Gastrocnemius medialis (tissue), 4 donors: ENCODE measurements at regions of chr9 and their contacts with region 1.

Region 1: GRCh38 chr9:100426530-100427428 is at the start of gene MSANTD3:
- DNase-seq: peak; percentile 25 to 61
- ATAC-seq: peak; percentile 74 to 77
- H3K4me3 ChIP-seq: peak within 1 kb of the TSS; percentile 67 to 88 (median 80)
- H3K27ac ChIP-seq: peak within 1 kb of the TSS; percentile 80 to 90 (median 85)
- H3K4me1 ChIP-seq: peaks cover 26 to 32% of the 10 kb centered on the region in 2 donors
- H3K27me3 ChIP-seq: no peaks in the 10 kb centered on the region
- CTCF ChIP-seq: peak; percentile 25 to 45 (median 41)
- POLR2A ChIP-seq: peak in 1 of 2 donors; percentile 4
- total RNA-seq, gene MSANTD3: 23.3 to 62.6 (median 40.1) TPM

Region 2: DNA sequence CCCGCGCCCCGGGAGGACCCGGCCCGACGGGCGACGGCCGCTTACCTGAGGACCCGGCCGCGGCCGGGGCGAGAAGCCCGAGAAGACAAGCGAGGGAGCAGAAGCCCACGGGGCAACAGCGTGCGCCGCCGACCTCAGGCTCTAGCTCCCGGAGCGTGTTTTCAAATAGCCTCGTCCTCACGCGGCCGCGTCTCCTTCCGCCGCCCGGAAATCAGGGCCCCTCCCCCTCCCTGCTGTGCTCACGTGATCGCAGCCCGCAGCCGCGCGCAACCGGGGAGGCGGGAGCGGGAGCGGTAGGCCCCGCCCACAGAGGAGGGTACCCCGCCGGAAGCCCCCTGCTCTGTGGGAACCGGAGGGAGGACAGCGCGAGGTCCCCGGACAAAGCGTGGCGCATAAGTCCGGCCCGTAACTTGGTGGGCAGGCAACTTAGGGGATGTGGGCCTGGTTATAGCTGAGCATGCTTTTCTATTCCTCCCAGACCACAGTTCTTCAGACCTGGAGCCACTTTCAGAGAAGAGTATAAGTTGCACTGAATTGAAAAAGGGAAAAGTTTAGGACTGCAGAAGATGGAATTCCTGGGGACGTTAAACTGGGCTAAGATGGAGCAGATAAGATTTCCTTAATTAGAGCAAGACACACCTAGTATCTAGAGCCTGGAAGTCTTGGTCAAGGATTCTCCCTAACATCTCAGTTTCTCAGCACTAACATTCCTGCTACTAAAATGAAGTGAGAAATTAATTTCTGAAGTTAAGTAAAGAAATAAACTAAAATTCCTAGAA is 73.9 kb before region 1 on chr9 and contains the start of gene TEX10:
- in situ Hi-C with region 1: no loop called
- intact Hi-C with region 1: loop called (anchors 1 kb)
- DNase-seq: peak; percentile 77 to 83
- ATAC-seq: peak; percentile 93 to 97
- H3K4me3 ChIP-seq: peak within 1 kb of the TSS; percentile 80 to 95 (median 84)
- H3K27ac ChIP-seq: peak within 1 kb of the TSS; percentile 77 to 90 (median 86)
- H3K4me1 ChIP-seq: peaks cover 13 to 17% of the 10 kb centered on the region in 2 donors
- H3K27me3 ChIP-seq: no peaks in the 10 kb centered on the region
- CTCF ChIP-seq: peak in 2 of 5 experiments; percentile 9 to 20
- POLR2A ChIP-seq: peak; percentile 66 to 71
- total RNA-seq, gene TEX10: 16.0 to 20.5 (median 18.4) TPM

Region 3: GRCh38 chr9:100466171-100466827 is 39.5 kb after region 1 on chr9:
- in situ Hi-C with region 1: no loop called
- intact Hi-C with region 1: loop called (anchors 5 kb)
- DNase-seq: peak; percentile 71 to 82
- ATAC-seq: peak; percentile 100
- H3K4me3 ChIP-seq: no peak overlapping the region
- H3K27ac ChIP-seq: peak overlapping the region; percentile 66 to 83 (median 71)
- H3K4me1 ChIP-seq: peaks cover 37 to 38% of the 10 kb centered on the region in 2 donors
- H3K27me3 ChIP-seq: no peaks in the 10 kb centered on the region
- CTCF ChIP-seq: no peak
- POLR2A ChIP-seq: no peak

Region 4: GRCh38 chr9:100575765-100576386 is 149.1 kb after region 1 on chr9:
- in situ Hi-C with region 1: loop called in 2 of 4 experiments (anchors 10 to 25 kb)
- intact Hi-C with region 1: loop called (anchors 5 kb)
- DNase-seq: no peak
- ATAC-seq: no peak
- H3K4me3 ChIP-seq: no peak overlapping the region
- H3K27ac ChIP-seq: peak overlapping the region; percentile 80 to 94 (median 88)
- H3K4me1 ChIP-seq: peaks cover 22 to 25% of the 10 kb centered on the region in 2 donors
- H3K27me3 ChIP-seq: no peaks in the 10 kb centered on the region
- CTCF ChIP-seq: no peak
- POLR2A ChIP-seq: no peak

Region 5: DNA sequence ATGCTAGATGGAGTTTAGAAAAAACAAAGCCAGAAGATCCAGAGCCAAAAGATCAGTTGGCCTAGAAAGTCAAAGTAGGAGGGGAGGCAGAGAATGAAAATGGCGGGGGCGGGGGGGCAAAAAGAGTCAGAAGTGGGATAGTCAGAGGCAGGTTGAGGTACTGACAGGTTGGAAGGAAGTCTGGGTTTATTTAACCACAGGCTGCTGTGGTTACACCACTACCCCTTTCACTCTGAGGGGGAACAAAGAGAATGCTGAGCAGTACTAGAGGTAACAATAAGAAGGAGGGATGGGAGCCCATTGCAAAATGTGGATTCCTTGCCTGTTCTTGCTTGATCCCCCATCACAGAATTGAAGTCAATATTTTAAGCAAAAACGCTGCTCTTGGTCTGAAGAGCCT is 262.9 kb after region 1 on chr9:
- in situ Hi-C with region 1: no loop called
- intact Hi-C with region 1: no loop called
- DNase-seq: no peak
- ATAC-seq: no peak
- H3K4me3 ChIP-seq: no peak overlapping the region
- H3K27ac ChIP-seq: no peak overlapping the region
- H3K4me1 ChIP-seq: no peaks in the 10 kb centered on the region
- H3K27me3 ChIP-seq: no peaks in the 10 kb centered on the region
- CTCF ChIP-seq: no peak
- POLR2A ChIP-seq: no peak

Region 6: GRCh38 chr9:101398068-101398929 is 971.5 kb after region 1 on chr9 and contains the starts of genes MRPL50 and ZNF189:
- in situ Hi-C with region 1: no loop called
- intact Hi-C with region 1: loop called (anchors 5 kb)
- DNase-seq: peak; percentile 99
- ATAC-seq: peak; percentile 97 to 98
- H3K4me3 ChIP-seq: peak within 1 kb of the TSS; percentile 71 to 85 (median 78)
- H3K27ac ChIP-seq: peak within 1 kb of the TSS; percentile 86 to 97 (median 90)
- H3K4me1 ChIP-seq: peaks cover 37 to 49% of the 10 kb centered on the region in 2 donors
- H3K27me3 ChIP-seq: no peaks in the 10 kb centered on the region
- CTCF ChIP-seq: no peak
- POLR2A ChIP-seq: peak; percentile 66 to 79
- total RNA-seq, gene MRPL50: 6.3 to 13.7 (median 10.2) TPM
- total RNA-seq, gene ZNF189: 9.7 to 42.8 (median 12.2) TPM